ENCODE measurements at regions of chr12 and their contacts with region 1.

Region 1: DNA sequence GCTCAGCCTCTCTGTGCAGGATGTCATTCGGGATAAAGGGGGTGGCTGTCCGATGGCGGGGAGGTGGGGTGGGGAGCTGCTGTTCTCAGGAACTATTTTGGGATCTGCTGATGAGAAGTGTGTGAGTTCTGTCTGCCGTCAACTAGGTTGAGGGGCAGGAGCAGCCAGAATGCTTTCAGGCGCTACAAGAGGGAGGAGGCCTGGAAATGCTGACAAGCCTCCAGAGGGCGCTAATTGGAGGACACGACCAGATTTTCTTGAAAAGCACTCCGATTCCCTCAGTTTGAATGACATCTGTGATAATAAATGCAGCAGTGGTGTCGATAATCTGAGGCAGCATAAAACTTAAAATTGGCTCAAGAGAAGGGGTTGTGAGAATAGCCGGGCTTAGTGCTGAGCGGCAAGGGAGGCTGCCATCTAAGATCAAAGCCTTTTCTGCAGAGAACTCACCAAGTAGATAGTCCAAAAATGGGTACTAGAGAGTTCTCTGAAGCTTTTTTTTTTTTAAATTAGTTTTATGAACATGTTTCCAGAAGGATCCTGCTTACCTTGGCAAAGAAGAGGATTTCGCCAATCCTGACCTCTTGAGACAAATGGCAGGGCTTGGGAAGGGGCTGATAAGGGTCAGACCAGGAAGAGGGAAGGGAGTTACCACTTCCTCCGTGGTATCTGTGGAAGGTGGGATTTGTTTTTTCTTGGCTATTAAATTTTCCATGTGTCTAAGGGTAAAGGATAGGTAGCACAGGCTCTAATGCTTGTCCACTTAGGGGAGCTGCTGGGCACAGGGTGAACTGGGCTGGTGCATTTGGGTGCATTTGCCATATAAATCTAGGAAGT is 94.4 kb downstream of the CRACR2A start:
- DNase-seq: peak; percentile 24 to 45 (median 40)
- ATAC-seq: peak; percentile 64; the same call in 2 of the 3 replicates
- H3K4me3 ChIP-seq: no peak overlapping the region
- H3K27ac ChIP-seq: no peak overlapping the region
- H3K4me1 ChIP-seq: no peaks in the 10 kb centered on the region
- H3K27me3 ChIP-seq: no peaks in the 10 kb centered on the region
- CTCF ChIP-seq: peak; percentile 50 to 59 (median 55)
- EP300 ChIP-seq: no peak
- POLR2A ChIP-seq: no peak
- RAD21 ChIP-seq: peak; percentile 15 to 39; a peak in 3 of 4 replicates

Region 2: GRCh38 chr12:3752741-3753486 is 94.4 kb after region 1 on chr12 and contains the start of gene CRACR2A:
- CTCF ChIA-PET with region 1: no interaction called
- POLR2A ChIA-PET with region 1: no interaction called
- in situ Hi-C with region 1: no loop called
- intact Hi-C with region 1: loop called (anchors 10 kb)
- DNase-seq: peak; percentile 84 to 89 (median 86)
- ATAC-seq: peak; percentile 99
- H3K4me3 ChIP-seq: peak within 1 kb of the TSS; percentile 62
- H3K27ac ChIP-seq: peak within 1 kb of the TSS; percentile 77
- H3K4me1 ChIP-seq: peaks cover 10 to 16% of the 10 kb centered on the region in 2 experiments; a peak in 3 of 5 replicates
- H3K27me3 ChIP-seq: no peaks in the 10 kb centered on the region
- CTCF ChIP-seq: peak; percentile 73 to 98 (median 82)
- EP300 ChIP-seq: no peak
- POLR2A ChIP-seq: peak; percentile 63
- RAD21 ChIP-seq: peak; percentile 29 to 57
- polyA plus RNA-seq, gene CRACR2A: 2.1 to 2.3 TPM

Measured in K562 (cell line).